ENCODE measurements at regions of chr6 and their contacts with region 1.

Region 1: GRCh38 chr6:132247381-132248159 is 153.7 kb downstream of the MOXD1 start:
- DNase-seq: no peak
- H3K4me3 Mint-ChIP-seq: no peak overlapping the region
- H3K27ac Mint-ChIP-seq: no peak overlapping the region
- H3K4me1 Mint-ChIP-seq: no peaks in the 10 kb centered on the region
- H3K27me3 Mint-ChIP-seq: peaks cover 15% of the 10 kb centered on the region

Region 2: DNA sequence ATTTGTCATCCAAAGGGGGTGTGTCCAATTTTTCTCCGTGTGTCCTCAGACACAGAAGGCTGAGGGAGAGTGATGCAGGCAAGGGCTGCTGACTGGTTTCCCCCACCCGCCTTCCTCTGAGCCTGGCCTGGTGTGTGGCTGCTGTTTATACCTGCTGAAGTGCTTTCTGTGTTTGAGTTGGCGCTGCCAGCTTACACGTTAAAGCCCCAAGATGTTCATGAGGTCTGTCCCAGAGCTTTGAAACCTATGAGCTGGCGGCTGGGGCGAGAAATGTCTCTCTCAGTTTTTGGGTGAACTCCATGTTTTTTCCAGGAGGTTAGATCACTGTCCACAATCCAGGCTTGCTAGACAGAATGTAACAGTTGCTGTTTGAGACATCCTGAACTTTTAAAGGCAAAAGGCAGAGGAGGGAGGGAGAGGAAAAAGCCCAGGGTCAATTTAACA is 227.4 kb before region 1 on chr6:
- CTCF ChIA-PET with region 1: no interaction called
- intact Hi-C with region 1: loop called (anchors 10 kb)
- DNase-seq: no peak
- H3K4me3 Mint-ChIP-seq: no peak overlapping the region
- H3K27ac Mint-ChIP-seq: no peak overlapping the region
- H3K4me1 Mint-ChIP-seq: no peaks in the 10 kb centered on the region
- H3K27me3 Mint-ChIP-seq: peaks cover 11% of the 10 kb centered on the region

Measured in activated naive CD4-positive, alpha-beta T cell treated with anti-CD3 and anti-CD28 coated beads for 36 hours (primary cell).